Endothelial cell of umbilical vein (primary cell): ENCODE measurements at regions of chr5 and their contacts with region 1.

Region 1: GRCh38 chr5:173283318-173284288 is 44.6 kb downstream of the STC2 start:
- DNase-seq: peak; percentile 62
- H3K4me3 ChIP-seq: no peak overlapping the region
- H3K27ac ChIP-seq: no peak overlapping the region
- H3K4me1 ChIP-seq: peaks cover 2% of the 10 kb centered on the region
- H3K27me3 ChIP-seq: peaks cover 16 to 18% of the 10 kb centered on the region in 2 experiments
- CTCF ChIP-seq: peak; percentile 84 to 89
- POLR2A ChIP-seq: no peak

Region 2: GRCh38 chr5:173010547-173011464 is 272.8 kb before region 1 on chr5:
- CTCF ChIA-PET with region 1: no interaction called
- POLR2A ChIA-PET with region 1: no interaction called
- dilution Hi-C with region 1: no loop called
- intact Hi-C with region 1: loop called (anchors 1 kb)
- DNase-seq: peak; percentile 75
- H3K4me3 ChIP-seq: no peak overlapping the region
- H3K27ac ChIP-seq: no peak overlapping the region
- H3K4me1 ChIP-seq: peaks cover 2% of the 10 kb centered on the region
- H3K27me3 ChIP-seq: no peaks in the 10 kb centered on the region
- CTCF ChIP-seq: peak; percentile 41 to 52
- POLR2A ChIP-seq: no peak

Region 3: DNA sequence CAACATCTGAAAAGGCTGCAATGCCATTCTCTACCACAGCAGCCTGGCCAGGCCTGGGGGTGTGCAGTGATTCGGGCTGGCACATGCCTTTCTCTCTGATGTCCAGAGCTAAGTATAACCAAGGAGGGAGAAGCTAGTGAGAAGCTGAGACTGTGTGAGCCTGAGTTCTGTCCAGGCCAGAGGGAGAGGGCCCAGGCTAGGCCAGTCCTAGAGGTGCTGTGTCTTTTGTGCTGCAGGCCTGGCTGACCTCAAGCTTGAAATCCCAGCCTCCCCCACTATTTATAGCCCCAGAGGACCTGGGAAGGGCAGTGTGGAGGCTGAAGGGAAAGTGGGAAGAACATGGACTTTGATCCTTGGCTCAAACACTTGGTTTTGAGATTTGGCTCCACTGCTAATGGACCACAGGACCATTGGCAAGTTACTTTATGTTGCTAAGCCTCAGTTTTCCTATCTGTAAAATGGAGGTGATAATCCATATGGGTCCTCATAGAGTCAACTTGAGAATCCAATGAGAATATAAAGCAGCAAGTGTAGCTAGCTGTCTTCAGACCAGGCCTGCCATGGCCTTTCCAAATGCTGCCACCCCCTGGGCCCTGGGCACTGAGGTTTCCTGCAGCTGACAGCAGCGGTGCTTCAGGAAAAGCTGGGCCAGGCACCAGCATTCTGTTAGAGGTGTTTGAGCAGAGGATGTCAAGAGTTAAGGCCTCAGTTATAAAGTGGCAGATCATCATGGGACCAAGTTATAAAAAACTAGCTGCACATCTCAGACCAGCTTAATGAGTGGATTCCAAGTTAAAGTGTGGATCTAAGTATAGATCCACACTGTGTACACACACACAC is 118.2 kb before region 1 on chr5:
- CTCF ChIA-PET with region 1: interaction called, 3 read pairs
- POLR2A ChIA-PET with region 1: interaction called, 6 read pairs
- dilution Hi-C with region 1: no loop called
- intact Hi-C with region 1: loop called (anchors 1 kb)
- DNase-seq: no peak
- H3K4me3 ChIP-seq: no peak overlapping the region
- H3K27ac ChIP-seq: no peak overlapping the region
- H3K4me1 ChIP-seq: no peaks in the 10 kb centered on the region
- H3K27me3 ChIP-seq: no peaks in the 10 kb centered on the region
- CTCF ChIP-seq: no peak
- POLR2A ChIP-seq: no peak

Region 4: DNA sequence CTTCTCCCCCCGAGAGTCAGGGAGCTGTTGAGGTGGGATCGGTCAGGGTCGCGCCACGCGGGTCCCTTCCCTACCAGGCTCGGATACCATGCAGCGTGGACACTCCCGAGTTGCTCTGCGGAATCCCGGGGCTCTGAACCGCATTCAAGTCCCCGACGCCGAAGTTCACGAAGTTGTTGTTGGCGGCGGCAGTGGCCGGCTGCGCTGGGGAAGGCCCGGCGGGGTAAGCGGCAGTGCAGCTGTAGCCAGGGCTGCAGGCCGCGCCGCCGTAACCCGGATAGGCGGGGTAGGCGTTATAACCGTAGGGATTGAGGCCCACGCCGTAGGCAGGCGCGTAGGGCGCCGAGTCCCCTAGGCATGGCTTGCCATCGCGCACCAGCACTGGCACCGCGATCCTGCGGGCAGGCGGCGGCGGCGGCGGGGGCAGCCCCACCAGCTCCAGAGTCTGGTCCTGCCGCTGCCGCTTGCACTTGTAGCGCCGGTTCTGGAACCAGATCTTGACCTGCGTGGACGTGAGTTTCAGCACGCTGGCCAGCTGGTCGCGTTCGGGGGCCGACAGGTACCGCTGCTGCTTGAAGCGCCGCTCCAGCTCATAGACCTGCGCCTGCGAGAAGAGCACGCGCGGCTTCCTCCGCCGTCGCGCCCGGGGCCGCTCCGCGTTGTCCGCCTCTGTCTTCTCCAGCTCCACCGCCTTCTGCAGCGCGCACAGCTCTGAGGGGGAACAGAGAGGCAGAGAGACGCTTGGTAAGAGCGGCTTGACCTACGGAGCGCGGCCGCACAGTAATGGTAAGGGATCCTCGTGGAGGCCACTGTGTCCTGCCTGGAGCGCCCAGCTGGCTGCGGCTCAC is 50.9 kb before region 1 on chr5:
- CTCF ChIA-PET with region 1: no interaction called
- POLR2A ChIA-PET with region 1: no interaction called
- dilution Hi-C with region 1: no loop called
- intact Hi-C with region 1: loop called (anchors 5 kb)
- DNase-seq: no peak
- H3K4me3 ChIP-seq: no peak overlapping the region
- H3K27ac ChIP-seq: no peak overlapping the region
- H3K4me1 ChIP-seq: peaks cover 8% of the 10 kb centered on the region
- H3K27me3 ChIP-seq: peaks cover 91 to 98% of the 10 kb centered on the region in 2 experiments
- CTCF ChIP-seq: no peak
- POLR2A ChIP-seq: no peak